Sigmoid colon (tissue), 7 donors: ENCODE measurements at regions of chr4 and their contacts with region 1.

Region 1: DNA sequence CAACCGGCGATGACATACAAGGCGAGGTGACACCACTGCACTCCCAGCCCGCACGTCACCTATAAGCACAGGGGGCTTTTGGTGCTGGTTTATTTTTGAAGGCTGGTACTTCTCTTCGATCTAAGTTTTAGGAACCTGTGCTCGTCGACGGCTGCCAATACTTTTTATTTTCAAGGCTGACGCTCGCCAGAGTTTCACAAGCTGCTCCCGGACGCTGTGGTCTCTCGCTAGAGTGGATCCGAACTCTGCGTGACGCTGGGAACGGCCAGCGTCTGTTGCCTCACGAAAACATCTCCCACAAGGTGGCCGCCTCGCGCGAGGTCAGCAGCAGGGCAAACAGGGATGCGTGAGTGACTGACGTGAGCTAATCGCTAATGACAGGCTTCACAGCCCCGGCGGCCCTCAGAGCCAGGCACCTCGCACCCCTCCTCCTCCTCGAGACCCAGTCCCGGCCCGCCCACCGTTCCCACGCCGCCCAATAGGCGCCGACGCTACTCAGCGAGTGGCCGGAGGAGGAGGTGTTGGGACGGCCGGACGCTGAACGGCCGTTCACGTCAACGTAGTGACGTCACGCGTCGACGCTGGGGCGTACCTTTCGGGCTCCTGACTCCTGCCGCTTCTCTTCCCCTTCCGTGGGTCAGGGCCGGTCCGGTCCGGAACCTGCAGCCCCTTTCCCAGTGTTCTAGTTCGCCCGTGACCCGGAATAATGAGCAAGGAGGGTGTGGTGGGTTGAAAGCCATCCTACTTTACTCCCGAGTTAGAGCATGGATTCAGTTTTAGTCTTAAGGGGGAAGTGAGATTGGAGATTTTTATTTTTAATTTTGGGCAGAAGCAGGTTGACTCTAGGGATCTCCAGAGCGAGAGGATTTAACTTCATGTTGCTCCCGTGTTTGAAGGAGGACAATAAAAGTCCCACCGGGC is at the start of gene CLCN3:
- DNase-seq: peak; percentile 98
- H3K4me3 ChIP-seq: peak within 1 kb of the TSS; percentile 69 to 81 (median 76)
- H3K27ac ChIP-seq: peak within 1 kb of the TSS; percentile 95 to 97 (median 95)
- H3K4me1 ChIP-seq: peaks cover 0 to 32% (median 17%) of the 10 kb centered on the region in 4 donors
- H3K27me3 ChIP-seq: no peaks in the 10 kb centered on the region
- CTCF ChIP-seq: no peak
- EP300 ChIP-seq: peak in 2 of 4 donors; percentile 27 to 90
- POLR2A ChIP-seq: peak; percentile 83 to 96
- total RNA-seq, gene CLCN3: 15.9 to 20.3 (median 17.0) TPM

Region 2: GRCh38 chr4:169362607-169363006 is 257.6 kb before region 1 on chr4:
- intact Hi-C with region 1: no loop called
- DNase-seq: no peak
- H3K4me3 ChIP-seq: no peak overlapping the region
- H3K27ac ChIP-seq: no peak overlapping the region
- H3K4me1 ChIP-seq: no peaks in the 10 kb centered on the region
- H3K27me3 ChIP-seq: no peaks in the 10 kb centered on the region
- CTCF ChIP-seq: no peak
- EP300 ChIP-seq: no peak
- POLR2A ChIP-seq: no peak

Region 3: DNA sequence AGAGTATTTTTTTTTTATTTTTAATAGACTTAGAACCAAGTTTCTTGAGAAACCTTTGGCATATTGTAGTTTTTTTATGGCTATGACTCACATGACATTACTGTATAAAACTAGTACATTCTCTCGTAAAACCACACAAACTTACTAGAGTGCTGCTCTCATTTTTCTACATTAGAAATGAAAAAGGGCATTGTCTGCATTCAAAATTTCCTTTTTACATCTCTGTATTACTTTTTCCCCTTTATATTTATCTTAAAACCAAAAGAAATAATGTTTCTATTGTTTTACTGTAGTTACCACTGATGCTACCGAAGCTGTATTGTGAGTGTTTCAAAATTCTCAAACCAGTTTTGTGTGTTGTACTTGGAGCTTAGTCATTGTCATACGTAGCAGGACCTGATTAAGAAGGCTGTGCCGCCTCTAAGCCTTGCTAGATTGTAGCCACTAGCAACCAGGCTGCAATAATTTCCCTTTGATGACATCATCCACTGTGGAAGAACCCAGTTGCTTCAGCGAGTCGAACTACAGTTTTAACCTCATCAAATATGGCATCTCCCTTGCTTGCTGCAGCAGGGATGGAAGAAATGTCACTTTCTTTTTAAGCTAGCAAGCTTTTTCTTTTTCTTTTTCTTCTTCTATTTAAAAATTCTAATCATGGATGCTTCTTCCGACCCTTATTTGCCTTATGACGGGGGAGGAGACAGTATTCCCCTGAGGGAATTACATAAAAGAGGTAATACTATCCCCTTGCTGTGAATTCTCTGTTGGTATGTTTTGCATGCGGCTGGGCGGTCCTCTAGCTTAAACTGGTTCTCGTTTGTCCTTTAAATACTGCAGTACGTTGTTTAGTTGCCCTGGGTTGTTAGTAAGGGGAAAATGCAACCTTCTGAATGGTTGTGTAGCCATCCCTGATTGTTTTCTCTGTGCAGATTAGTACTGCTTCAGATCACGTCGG is 39.8 kb after region 1 on chr4:
- intact Hi-C with region 1: loop called (anchors 2 kb)
- DNase-seq: peak; percentile 90
- H3K4me3 ChIP-seq: peak overlapping the region; percentile 35 to 57 (median 45)
- H3K27ac ChIP-seq: peak overlapping the region; percentile 66 to 89 (median 80)
- H3K4me1 ChIP-seq: peaks cover 0 to 56% (median 24%) of the 10 kb centered on the region in 4 donors
- H3K27me3 ChIP-seq: no peaks in the 10 kb centered on the region
- CTCF ChIP-seq: no peak
- EP300 ChIP-seq: no peak
- POLR2A ChIP-seq: peak in 1 of 2 donors; percentile 21

Region 4: DNA sequence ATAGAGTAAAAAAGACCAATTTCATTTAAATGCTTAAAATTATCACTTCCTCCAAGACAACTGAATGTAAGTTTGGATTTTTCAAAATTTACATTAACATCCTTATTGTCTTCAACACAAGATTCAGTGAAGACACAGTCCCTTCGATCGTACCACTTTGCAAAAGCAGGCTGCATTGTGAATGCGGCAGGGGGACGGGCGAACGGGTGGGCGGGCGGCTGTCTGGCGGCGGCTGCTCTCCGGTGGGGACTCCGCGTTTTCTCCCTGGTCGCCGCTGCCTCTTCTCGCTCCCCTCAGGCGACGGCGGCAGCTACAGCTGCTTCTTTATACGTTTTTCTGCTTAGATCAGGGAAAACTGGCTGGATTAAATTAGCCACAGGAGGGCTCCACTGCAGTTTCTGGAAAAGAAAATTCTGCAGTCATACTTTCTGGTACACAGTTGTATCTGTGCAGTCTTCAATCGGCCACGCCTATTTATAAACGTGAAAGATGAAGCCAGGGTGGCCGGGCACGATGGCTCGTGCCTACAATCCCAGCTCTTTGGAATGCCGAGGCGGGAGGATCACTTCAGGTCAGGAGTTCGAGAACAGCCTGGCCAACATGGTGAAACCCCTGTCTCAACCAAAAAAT is 171.4 kb after region 1 on chr4:
- intact Hi-C with region 1: loop called (anchors 10 kb)
- DNase-seq: no peak
- H3K4me3 ChIP-seq: peak overlapping the region in 3 of 4 donors; percentile 20 to 33 (median 30)
- H3K27ac ChIP-seq: no peak overlapping the region
- H3K4me1 ChIP-seq: peaks cover 0 to 10% (median 7%) of the 10 kb centered on the region in 4 donors
- H3K27me3 ChIP-seq: peaks cover 0 to 54% (median 4%) of the 10 kb centered on the region in 3 donors
- CTCF ChIP-seq: peak in 2 of 4 experiments; percentile 23 to 46
- EP300 ChIP-seq: no peak
- POLR2A ChIP-seq: no peak